ENCODE measurements at regions of chr1 and their contacts with region 1.

Region 1: DNA sequence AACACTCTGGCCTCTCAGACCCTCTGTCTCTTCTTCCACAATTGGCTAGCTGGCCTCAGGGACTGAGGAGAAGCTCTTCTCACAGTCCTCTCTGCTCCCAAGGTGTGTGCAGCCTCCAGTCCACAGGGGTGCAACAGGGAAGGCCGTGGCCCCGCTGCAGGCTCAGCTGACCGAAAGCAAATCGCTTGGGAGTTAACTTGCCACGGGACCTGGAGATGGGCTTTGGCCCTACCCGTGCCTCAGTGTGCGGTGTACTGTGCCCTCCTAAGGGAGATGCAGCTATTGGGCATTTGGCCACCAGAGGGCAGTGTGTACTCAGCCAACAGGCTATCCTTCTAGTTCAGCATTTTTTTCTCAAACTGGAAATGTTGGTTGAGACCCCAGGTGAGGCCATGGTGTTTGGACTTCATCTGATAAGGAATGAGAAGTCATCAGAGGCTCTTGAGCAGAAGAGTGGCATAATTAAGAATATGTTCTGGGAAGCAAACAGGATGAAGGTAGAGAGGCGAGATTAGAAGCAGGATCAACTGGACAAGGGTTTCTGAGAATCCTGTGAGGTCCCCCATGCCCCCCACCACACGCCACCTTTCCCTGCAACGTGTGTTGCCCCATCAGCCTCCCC is 42.5 kb upstream of the TMEM125 start:
- DNase-seq: peak; percentile 81
- ATAC-seq: peak; percentile 74

Region 2: GRCh38 chr1:43414634-43415223 is 187.5 kb after region 1 on chr1:
- intact Hi-C with region 1: loop called (anchors 1 kb)
- DNase-seq: no peak
- ATAC-seq: peak; percentile 76

Measured in Right ventricle myocardium inferior (tissue), 1 donor.